Heart left ventricle (tissue), 16 donors: ENCODE measurements at regions of chr6 and their contacts with region 1.

Region 1: DNA sequence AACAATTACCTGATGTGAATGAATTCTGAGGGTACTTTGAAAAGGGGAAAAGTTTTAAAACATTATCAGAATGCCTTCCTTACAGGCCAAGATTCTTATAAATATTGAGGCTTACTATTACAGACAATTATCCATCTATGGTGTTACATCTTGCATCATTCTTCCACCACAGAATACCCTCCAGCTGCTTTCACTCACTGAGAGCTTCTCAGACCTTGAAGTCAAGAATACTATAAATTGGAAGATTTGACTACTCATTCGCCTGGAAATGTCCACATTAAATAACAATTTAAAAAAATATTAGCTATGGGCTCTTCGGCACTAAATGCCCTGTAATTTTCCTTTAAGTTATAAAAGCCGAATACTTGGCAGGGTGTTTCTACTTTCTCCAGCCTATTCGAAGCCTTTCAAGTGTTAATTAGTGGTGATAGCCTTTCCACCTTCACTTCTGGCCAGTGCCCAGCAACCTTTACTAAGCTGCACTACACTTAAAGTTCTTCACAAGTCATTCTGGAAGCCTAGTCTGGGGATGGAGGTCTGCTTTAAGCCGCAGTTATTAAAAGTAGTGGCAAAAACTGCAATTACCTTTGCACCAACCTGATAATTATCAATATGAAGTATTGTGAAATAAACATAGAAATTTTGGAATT is 101.0 kb downstream of the BMP5 start:
- DNase-seq: no peak
- ATAC-seq: no peak
- H3K4me3 ChIP-seq: no peak overlapping the region
- H3K27ac ChIP-seq: no peak overlapping the region
- H3K4me1 ChIP-seq: no peaks in the 10 kb centered on the region
- H3K27me3 ChIP-seq: no peaks in the 10 kb centered on the region
- CTCF ChIP-seq: no peak
- POLR2A ChIP-seq: no peak

Region 2: GRCh38 chr6:55812509-55812908 is 38.1 kb after region 1 on chr6:
- intact Hi-C with region 1: loop called in 1 of 10 experiments (anchors 5 kb)
- DNase-seq: no peak
- ATAC-seq: no peak
- H3K4me3 ChIP-seq: no peak overlapping the region
- H3K27ac ChIP-seq: no peak overlapping the region
- H3K4me1 ChIP-seq: no peaks in the 10 kb centered on the region
- H3K27me3 ChIP-seq: no peaks in the 10 kb centered on the region
- CTCF ChIP-seq: no peak
- POLR2A ChIP-seq: no peak